Activated CD4-positive, alpha-beta T cell treated with anti-CD3 and anti-CD28 coated beads, Interleukin-2, amount 10 ng/mL, durations not matched to agents 24 days and 14 days (primary cell): ENCODE measurements at regions of chr11 and their contacts with region 1.

Region 1: DNA sequence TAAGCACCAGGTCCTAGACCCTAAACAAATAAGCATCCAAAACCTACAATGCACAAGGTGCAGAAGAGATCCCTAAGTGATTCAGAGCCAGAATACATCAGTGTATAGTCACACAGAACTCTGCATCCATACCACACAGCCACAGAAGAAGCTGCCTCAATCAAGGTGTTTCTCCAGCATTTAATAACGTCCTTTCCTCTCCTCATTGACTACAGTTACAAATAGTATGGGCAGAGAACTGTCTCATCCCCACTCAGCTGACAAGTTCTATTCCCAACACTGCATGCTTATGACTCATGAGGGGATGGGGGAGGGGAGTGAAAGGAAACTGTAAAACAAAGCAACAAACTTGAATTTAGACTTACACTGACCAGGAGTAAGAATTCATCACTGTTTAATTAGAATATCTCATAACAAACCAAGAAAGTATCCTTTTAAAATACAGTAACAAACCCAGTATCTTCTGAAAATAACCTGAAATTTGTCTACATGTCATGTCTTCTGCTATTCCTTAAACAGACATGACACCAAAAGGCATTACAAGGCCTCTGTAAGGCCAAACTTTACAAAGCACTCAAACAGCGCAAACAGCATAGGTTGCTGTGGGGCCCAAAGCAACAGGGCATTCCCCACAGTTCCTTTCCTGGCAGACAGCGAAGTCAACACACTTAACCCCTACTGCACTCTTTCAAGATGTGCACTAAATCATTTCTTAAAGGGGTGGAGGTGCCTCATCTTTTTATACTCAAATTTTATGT is 29.3 kb downstream of the CELF1 start:
- DNase-seq: peak; percentile 83
- H3K4me3 Mint-ChIP-seq: peak overlapping the region; percentile 64
- H3K27ac Mint-ChIP-seq: peak overlapping the region; percentile 85
- H3K4me1 Mint-ChIP-seq: peaks cover 50% of the 10 kb centered on the region
- H3K27me3 Mint-ChIP-seq: no peaks in the 10 kb centered on the region

Region 2: GRCh38 chr11:47509077-47509536 is 14.5 kb before region 1 on chr11:
- intact Hi-C with region 1: loop called (anchors 2 kb)
- DNase-seq: peak; percentile 62
- H3K4me3 Mint-ChIP-seq: peak overlapping the region; percentile 68
- H3K27ac Mint-ChIP-seq: peak overlapping the region; percentile 88
- H3K4me1 Mint-ChIP-seq: peaks cover 65% of the 10 kb centered on the region
- H3K27me3 Mint-ChIP-seq: no peaks in the 10 kb centered on the region

Region 3: GRCh38 chr11:47539681-47540038 is 16.0 kb after region 1 on chr11:
- intact Hi-C with region 1: loop called (anchors 1 kb)
- DNase-seq: no peak
- H3K4me3 Mint-ChIP-seq: no peak overlapping the region
- H3K27ac Mint-ChIP-seq: peak overlapping the region; percentile 81
- H3K4me1 Mint-ChIP-seq: peaks cover 36% of the 10 kb centered on the region
- H3K27me3 Mint-ChIP-seq: no peaks in the 10 kb centered on the region

Region 4: DNA sequence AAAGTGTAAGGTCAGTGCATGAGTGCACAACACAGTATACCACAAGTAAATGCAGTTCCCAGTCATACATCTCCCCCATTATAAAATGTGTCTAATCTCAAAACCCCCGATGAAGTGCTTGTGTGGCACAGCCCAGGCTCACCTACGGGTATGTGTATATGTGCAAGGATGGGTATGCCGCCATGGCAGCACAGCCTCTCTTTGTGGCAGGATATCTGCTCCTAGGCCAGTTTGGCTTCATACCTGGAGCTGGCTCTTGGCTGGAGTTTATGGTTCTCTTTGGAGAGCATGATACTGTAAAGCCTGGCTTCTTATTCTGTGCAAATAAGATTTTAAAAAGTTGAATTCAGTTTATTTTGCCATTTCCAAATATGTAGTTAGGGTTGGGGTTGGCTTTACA is 136.4 kb after region 1 on chr11:
- intact Hi-C with region 1: loop called (anchors 5 kb)
- DNase-seq: no peak
- H3K4me3 Mint-ChIP-seq: no peak overlapping the region
- H3K27ac Mint-ChIP-seq: no peak overlapping the region
- H3K4me1 Mint-ChIP-seq: peaks cover 4% of the 10 kb centered on the region
- H3K27me3 Mint-ChIP-seq: peaks cover 10% of the 10 kb centered on the region